Tibial artery (tissue), 4 donors: ENCODE measurements at regions of chr6 and their contacts with region 1.

Region 1: GRCh38 chr6:27132532-27133280 is 114.8 kb upstream of the PRSS16 start:
- DNase-seq: peak; percentile 92 to 95
- H3K4me3 ChIP-seq: peak overlapping the region; percentile 58 to 63
- H3K27ac ChIP-seq: peak overlapping the region; percentile 81 to 84
- H3K4me1 ChIP-seq: peaks cover 0 to 14% (median 3%) of the 10 kb centered on the region in 4 donors
- H3K27me3 ChIP-seq: no peaks in the 10 kb centered on the region
- CTCF ChIP-seq: peak in 1 of 2 experiments; percentile 10

Region 2: DNA sequence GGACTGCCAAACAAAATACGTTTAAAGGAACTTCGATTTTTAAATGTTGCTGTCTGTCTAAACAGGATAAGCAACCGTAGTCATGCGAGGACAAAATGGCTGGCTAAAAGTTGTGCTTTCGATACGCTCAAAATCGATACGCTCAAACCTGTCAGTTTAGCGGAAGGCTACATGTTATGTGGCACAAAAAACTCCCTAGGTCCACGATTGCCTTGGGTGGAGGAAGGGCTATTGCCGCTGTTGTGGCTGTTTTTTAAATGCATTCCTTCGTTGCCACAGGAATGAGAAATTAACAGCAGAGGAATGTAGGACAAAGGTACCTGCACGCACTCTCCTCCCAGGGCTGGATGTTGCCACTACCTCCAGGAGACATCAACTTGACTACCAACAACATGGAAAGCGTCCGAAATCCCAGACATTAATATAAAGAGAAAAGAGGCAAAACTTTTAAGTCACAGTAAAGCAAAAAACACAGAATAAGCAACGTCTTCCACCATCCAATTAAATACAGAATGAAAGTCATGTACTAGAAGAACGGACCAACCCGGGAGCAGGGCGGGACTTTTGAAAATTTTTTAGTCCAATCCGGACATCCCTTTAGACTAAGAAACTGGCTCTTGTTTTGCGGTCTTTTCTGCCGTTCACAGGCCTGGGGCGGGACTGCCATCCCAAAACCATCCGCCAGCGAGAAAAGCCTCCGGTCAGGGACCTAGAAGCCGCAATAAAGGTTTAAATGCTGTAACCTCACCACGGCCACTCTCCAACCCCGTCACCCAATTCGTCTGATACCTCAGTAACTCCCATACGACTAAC is 1077.6 kb before region 1 on chr6:
- intact Hi-C with region 1: loop called (anchors 10 kb)
- DNase-seq: peak; percentile 95 to 96
- H3K4me3 ChIP-seq: peak overlapping the region; percentile 58 to 79
- H3K27ac ChIP-seq: peak overlapping the region; percentile 89 to 96
- H3K4me1 ChIP-seq: peaks cover 0 to 15% (median 9%) of the 10 kb centered on the region in 4 donors
- H3K27me3 ChIP-seq: no peaks in the 10 kb centered on the region
- CTCF ChIP-seq: peak; percentile 28 to 51

Region 3: DNA sequence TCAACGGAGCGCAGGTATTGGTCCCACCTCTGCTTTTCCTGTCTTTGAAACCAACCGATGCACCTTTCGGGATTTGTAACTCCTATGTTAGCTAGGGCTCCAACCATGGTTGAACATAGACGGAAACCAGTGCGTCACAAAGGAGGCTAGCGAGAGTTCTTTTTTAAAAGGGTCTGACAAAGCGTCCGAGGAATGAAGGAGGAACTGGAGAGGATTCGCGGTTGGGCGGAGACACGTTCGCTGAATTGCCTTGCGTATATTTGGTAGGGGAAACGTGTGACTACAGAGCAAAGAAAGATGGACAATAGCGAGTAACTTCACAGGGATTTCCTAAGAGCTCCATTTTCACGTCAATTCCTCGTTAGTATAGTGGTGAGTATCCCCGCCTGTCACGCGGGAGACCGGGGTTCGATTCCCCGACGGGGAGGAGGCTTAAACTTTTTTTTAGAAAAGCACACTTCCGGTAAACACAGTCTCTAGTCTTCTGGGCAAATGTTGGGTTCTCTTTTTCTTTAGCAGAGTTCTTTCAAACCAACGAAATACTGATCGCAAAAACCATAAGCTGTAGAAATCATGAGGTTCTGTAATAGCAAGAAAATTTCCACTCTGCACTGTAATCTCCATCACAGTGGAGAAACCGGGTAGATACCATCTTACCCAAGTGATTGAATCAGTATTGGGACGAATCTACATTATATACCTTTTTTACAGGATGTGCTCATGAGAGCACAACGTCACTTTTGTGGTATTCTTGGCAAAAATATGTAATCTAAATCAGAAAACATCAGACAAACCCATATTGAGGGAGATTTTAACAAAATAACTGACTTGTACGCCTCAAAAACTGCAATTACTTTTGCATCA is 346.8 kb after region 1 on chr6:
- intact Hi-C with region 1: loop called (anchors 2 kb)
- DNase-seq: peak; percentile 77 to 92
- H3K4me3 ChIP-seq: peak overlapping the region; percentile 69 to 76
- H3K27ac ChIP-seq: peak overlapping the region; percentile 96 to 97
- H3K4me1 ChIP-seq: peaks cover 0 to 14% (median 9%) of the 10 kb centered on the region in 4 donors
- H3K27me3 ChIP-seq: no peaks in the 10 kb centered on the region
- CTCF ChIP-seq: no peak